Posterior cingulate gyrus (tissue), 11 donors: ENCODE measurements at regions of chr14 and their contacts with region 1.

Region 1: GRCh38 chr14:28264306-28264705 is 502.3 kb upstream of the FOXG1 start:
- DNase-seq: peak in 4 of 10 donors; percentile 22 to 74 (median 50)

Region 2: DNA sequence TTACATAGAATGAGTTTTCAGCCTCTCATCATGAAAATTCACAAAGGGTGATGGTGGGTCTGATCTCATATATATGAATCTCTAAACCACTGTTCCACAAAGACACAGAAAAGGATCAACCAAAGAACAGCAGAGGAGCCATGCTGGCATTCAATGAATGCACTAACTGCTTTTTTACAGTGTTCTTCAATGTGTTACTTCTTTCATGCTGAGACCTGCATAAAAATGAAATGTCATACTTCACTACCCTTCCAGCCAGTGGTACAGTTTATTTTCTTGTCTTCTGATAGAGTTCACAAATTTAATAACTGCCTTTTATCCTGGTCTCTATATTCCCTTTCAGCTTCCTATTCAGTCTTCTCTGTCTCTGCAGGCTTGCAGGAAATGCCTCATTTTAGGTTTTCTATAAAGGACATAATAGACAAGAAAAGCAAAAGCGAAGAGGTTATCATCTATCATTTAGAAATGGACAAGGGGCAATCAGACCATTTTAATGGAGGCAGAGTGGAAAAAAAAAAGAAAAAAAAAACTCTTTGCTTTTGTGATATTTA is 334.4 kb before region 1 on chr14:
- intact Hi-C with region 1: no loop called
- DNase-seq: no peak

Region 3: DNA sequence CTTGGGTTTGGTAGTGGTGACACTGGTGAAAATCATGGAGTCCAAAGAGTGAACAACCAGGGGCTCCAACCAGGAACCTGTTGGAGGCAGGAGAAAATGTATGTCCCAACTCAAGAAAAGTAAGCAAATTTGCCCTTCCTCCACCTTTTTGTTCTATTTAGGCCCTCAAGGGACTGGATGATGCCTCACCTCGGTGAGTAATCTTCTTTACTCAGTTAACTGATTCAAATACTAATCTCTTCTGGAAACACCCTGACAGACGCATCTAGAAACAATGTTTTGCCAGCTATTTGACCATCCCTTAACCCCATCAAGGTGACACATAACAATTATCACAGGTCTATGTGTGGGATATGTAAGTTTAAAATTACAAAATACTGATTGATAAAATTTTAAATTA is 229.9 kb after region 1 on chr14:
- intact Hi-C with region 1: loop called (anchors 5 kb)
- DNase-seq: no peak